Esophagus squamous epithelium (tissue), 5 donors: ENCODE measurements at regions of chr7 and their contacts with region 1.

Region 1: DNA sequence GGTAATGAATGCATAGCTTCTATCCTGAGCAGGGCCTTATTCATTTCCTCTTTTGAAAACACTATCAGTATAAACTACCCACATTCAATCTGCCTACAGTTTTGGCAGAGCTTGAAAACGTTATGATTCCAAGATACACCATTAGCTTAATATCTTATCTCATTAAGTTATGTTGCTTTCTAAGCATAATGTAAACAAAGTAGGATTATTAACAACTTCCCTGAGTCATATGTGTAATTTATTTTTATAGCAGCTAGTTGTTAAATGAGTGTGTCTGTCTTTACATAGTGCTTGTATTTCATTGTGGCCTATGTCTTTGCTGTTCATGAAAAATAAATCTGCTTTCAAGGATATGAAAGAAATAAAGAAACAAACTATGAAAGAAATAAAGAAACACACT is 106.2 kb upstream of the DLX6 start:
- DNase-seq: no peak
- H3K4me3 ChIP-seq: no peak overlapping the region
- H3K27ac ChIP-seq: no peak overlapping the region
- H3K4me1 ChIP-seq: peaks cover 0 to 11% (median 4%) of the 10 kb centered on the region in 3 donors
- H3K27me3 ChIP-seq: peaks cover 0 to 51% (median 4%) of the 10 kb centered on the region in 4 donors
- CTCF ChIP-seq: no peak
- POLR2A ChIP-seq: no peak

Region 2: DNA sequence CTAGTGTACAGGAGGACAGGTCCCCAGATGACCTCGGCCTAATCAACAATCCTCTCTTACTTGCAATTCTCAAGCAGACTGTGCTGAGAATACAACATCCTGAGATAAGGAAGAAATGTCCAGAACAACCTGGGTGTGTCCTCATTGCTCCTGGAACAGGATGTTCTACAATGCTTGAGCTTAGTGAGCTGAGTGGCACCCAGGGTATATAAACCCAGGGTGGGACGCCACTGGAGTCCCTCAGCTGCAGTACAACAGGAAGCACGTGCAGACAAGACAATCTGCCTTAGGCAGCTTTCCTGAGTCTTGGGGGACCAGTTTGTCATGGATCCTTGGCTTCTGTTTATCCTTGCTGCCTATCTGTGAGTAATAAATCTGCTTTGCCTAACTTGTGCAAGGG is 549.5 kb before region 1 on chr7:
- intact Hi-C with region 1: no loop called
- DNase-seq: no peak
- H3K4me3 ChIP-seq: no peak overlapping the region
- H3K27ac ChIP-seq: no peak overlapping the region
- H3K4me1 ChIP-seq: no peaks in the 10 kb centered on the region
- H3K27me3 ChIP-seq: no peaks in the 10 kb centered on the region
- CTCF ChIP-seq: no peak
- POLR2A ChIP-seq: no peak

Region 3: DNA sequence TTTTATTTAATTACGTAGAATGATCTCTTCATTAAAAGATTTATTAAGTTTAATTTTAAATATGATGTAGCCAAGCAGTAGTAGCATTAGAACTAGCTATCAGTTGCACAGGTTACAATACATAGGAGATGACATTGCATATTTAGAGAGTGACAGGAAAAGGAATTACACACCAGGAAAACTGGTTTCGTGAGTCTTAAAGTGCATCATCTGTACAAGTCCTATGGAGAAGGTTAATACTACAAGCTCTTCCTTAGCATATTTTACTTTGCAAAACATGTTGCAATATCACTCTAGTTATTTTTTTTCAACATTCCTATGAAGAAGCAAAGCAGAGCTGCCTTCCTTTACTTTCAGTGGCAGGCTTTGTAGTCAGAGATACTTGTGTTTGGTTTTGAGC is 169.3 kb before region 1 on chr7:
- intact Hi-C with region 1: no loop called
- DNase-seq: no peak
- H3K4me3 ChIP-seq: no peak overlapping the region
- H3K27ac ChIP-seq: peak overlapping the region in 3 of 4 donors; percentile 76 to 84 (median 82)
- H3K4me1 ChIP-seq: peaks cover 5 to 36% (median 8%) of the 10 kb centered on the region in 3 donors
- H3K27me3 ChIP-seq: peaks cover 0 to 7% (median 0%) of the 10 kb centered on the region in 4 donors
- CTCF ChIP-seq: no peak
- POLR2A ChIP-seq: no peak

Region 4: DNA sequence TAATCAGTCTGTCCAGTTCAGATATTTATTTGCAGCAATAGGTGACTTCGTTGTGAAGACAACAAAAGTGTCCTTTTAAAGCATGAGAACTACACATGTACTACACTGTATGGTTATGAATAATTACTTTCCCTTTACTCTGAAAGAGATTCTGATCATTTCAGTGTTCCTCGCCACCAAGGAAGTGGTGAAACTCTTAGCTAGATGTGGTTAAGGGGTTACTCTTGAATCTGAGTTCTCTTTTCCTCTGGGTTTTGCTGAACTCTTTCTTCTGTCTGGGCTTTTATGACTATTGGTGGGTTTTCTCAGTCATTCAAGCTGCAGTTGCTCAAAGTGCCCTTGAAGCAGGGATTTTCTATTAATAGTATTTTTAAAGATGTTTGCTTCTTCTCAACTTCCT is 61.5 kb before region 1 on chr7:
- intact Hi-C with region 1: loop called (anchors 10 kb)
- DNase-seq: no peak
- H3K4me3 ChIP-seq: no peak overlapping the region
- H3K27ac ChIP-seq: no peak overlapping the region
- H3K4me1 ChIP-seq: peaks cover 0 to 5% (median 0%) of the 10 kb centered on the region in 3 donors
- H3K27me3 ChIP-seq: peaks cover 0 to 13% (median 0%) of the 10 kb centered on the region in 4 donors
- CTCF ChIP-seq: no peak
- POLR2A ChIP-seq: no peak

Region 5: DNA sequence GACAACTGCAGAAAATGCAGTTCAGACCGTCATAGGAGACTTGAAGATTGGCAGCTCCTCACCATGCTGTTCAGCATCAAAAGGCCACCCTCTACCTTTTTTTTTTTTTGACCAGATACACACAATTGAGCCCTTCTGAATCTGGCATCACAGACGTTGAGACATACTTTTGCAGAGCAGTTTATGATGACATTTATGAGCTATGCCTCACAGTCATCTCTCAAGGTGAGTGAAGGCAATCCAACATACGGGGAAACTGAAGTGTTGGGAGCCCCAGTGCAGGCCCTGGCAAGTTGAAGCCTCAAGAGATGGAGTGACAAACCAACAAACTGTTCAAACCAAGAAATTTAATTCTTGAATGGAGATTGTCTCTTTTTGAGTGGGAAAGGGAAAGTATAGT is 22.7 kb after region 1 on chr7:
- intact Hi-C with region 1: no loop called
- DNase-seq: no peak
- H3K4me3 ChIP-seq: no peak overlapping the region
- H3K27ac ChIP-seq: peak overlapping the region in 3 of 4 donors; percentile 33 to 78 (median 74)
- H3K4me1 ChIP-seq: peaks cover 0 to 22% (median 0%) of the 10 kb centered on the region in 3 donors
- H3K27me3 ChIP-seq: peaks cover 0 to 14% (median 0%) of the 10 kb centered on the region in 4 donors
- CTCF ChIP-seq: no peak
- POLR2A ChIP-seq: no peak

Region 6: DNA sequence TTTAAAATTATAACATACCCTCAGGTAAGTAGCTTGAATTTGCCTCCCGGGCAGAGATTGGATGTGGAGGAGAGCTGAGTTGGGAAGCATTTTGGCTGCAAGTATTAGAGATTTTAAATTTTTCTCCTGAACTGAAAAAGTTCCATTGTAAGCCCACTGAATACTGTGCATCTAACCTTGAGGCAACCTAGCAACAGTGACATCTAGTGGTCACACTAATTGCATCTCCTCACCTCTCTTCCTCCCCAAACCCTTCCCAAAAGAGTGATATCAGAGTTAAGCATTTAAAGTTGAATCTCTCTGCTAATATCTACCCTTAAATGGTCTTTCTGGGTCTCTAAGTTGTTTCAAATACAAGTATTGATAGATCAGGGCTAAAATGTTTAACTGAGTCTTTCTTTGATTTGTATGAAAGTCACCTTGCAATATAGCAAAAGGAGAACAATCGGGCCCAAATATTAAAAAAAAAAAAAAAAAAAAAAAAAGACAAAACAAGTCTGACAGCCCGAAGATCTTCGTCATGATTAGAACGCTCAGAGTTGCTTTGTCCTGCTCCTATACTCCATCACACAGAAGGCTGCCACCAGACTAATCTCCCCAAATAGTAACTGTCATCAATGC is 166.0 kb after region 1 on chr7:
- intact Hi-C with region 1: no loop called
- DNase-seq: no peak
- H3K4me3 ChIP-seq: no peak overlapping the region
- H3K27ac ChIP-seq: no peak overlapping the region
- H3K4me1 ChIP-seq: no peaks in the 10 kb centered on the region
- H3K27me3 ChIP-seq: peaks cover 0 to 3% (median 0%) of the 10 kb centered on the region in 4 donors
- CTCF ChIP-seq: peak in 5 of 6 experiments; percentile 10 to 65 (median 46)
- POLR2A ChIP-seq: no peak